ENCODE measurements at regions of chr14 and their contacts with region 1.

Region 1: DNA sequence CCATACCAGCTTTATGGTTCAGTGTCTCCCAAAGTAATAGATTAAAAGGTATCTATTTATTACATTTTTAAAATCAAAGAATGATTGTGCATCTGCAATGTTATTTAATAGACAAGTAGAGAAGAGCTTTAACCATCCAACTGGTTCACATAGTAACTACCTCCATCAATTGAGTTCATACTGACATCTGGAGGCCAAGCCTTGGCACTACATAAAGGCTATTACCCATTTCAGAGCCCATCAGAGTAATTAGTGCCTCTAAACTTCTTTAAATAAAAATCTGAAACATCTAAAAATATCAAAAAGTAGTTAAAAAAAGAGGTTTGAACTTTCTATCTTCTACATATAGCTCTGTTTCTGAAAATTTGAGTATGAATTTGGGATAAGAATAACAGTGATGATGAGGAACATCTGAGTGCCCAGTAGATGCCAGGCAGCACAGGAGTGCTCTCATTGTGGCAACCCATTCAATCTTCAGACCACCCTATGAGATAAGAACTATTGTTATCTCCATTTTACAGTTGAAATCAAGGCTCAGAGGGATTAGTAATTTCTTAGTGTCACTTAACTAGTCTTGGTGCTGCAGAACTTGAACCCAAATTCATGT is 132.9 kb upstream of the DAAM1 start:
- DNase-seq: no peak
- H3K4me3 ChIP-seq: no peak overlapping the region
- H3K27ac ChIP-seq: no peak overlapping the region
- H3K4me1 ChIP-seq: no peaks in the 10 kb centered on the region
- H3K27me3 ChIP-seq: no peaks in the 10 kb centered on the region
- CTCF ChIP-seq: peak in 10 of 11 experiments; percentile 24 to 69 (median 54)
- POLR2A ChIP-seq: no peak

Region 2: GRCh38 chr14:58501214-58501816 is 554.2 kb before region 1 on chr14:
- intact Hi-C with region 1: loop called (anchors 5 kb)
- DNase-seq: no peak
- H3K4me3 ChIP-seq: no peak overlapping the region
- H3K27ac ChIP-seq: no peak overlapping the region
- H3K4me1 ChIP-seq: no peaks in the 10 kb centered on the region
- H3K27me3 ChIP-seq: no peaks in the 10 kb centered on the region
- CTCF ChIP-seq: peak; percentile 33 to 75 (median 71)
- POLR2A ChIP-seq: no peak

Region 3: GRCh38 chr14:58947814-58948445 is 107.6 kb before region 1 on chr14:
- intact Hi-C with region 1: no loop called
- DNase-seq: no peak
- H3K4me3 ChIP-seq: no peak overlapping the region
- H3K27ac ChIP-seq: no peak overlapping the region
- H3K4me1 ChIP-seq: no peaks in the 10 kb centered on the region
- H3K27me3 ChIP-seq: no peaks in the 10 kb centered on the region
- CTCF ChIP-seq: no peak
- POLR2A ChIP-seq: no peak